Stomach (tissue), 19 donors: ENCODE measurements at regions of chr11 and their contacts with region 1.

Region 1: DNA sequence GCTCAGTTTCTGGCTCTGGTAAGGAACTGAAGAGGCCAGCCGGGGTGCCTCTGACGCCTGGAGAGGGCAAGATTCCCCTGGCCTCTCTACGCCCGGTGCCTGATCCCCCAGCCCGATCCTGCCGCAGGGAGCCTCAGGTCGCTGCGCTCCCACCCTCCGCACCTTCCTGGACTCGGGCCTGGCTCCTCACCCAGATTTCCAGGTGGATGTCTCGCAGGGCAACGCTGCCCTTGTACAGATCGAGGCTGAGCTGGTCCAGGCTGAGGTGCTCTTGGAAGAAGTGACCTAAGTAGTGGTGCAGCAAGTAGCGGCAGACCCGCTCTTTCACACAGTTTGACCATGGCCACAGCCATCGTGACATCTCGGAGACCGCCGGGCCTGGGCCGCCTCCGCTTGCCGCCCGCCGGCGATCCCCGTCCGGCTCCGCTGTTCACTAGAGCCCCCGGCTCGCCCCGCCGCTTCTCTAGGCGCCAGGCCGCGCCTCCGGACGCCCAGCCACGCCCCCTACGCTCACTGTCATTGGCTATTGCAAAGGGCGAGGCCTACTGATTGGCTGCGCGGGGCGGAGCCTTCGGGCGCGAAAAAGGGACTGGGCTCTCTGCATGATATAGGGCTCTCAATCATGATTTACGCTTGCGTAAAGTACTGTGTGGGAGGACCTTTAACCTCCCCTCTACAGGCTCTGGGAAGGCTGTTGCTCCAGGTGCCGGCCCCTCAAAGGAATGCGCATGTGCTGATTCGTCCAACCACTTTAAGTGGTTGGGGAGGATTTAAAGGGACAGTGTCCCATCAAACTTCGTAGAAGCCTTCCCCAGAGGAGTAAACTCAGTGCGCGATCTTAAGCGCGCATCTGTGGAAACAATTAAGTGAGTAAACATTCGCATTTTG is at the start of gene ATG2A:
- DNase-seq: peak; percentile 100
- H3K4me3 ChIP-seq: peak within 1 kb of the TSS; percentile 59 to 93 (median 66)
- H3K27ac ChIP-seq: peak within 1 kb of the TSS; percentile 81 to 84 (median 83)
- H3K4me1 ChIP-seq: peaks cover 25 to 37% (median 36%) of the 10 kb centered on the region in 4 donors
- H3K27me3 ChIP-seq: no peaks in the 10 kb centered on the region
- CTCF ChIP-seq: no peak
- EP300 ChIP-seq: no peak
- POLR2A ChIP-seq: peak in 2 of 4 donors; percentile 31 to 62
- total RNA-seq, gene ATG2A: 14.3 to 77.6 (median 46.1) TPM

Region 2: DNA sequence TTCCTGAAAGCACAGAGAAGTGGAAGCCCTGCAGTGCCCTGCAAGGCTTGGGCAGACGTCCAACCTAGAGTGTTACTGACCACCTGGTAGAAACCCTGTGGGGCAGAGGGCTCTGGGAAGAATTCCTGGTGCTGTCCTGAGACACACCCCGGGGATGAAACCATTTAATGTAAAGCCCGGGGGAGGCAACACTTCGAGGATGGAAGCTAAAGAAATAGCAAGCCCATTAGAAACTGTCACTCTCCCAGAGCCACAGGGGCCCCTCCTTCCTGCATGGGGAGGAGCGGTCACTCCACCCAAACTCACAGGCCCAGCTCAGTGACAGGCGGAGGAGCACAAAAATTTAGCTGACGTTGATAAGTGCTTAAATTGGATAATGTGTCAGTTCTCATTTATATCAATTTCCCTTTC is 251.6 kb before region 1 on chr11:
- intact Hi-C with region 1: no loop called
- DNase-seq: no peak
- H3K4me3 ChIP-seq: no peak overlapping the region
- H3K27ac ChIP-seq: no peak overlapping the region
- H3K4me1 ChIP-seq: no peaks in the 10 kb centered on the region
- H3K27me3 ChIP-seq: peaks cover 0 to 31% (median 0%) of the 10 kb centered on the region in 3 donors
- CTCF ChIP-seq: no peak
- EP300 ChIP-seq: no peak
- POLR2A ChIP-seq: no peak

Region 3: GRCh38 chr11:64996710-64997380 is 79.8 kb after region 1 on chr11 and contains the start of gene BATF2:
- intact Hi-C with region 1: loop called (anchors 10 kb)
- DNase-seq: peak; percentile 89 to 91
- H3K4me3 ChIP-seq: peak within 1 kb of the TSS; percentile 49 to 59 (median 52)
- H3K27ac ChIP-seq: peak within 1 kb of the TSS; percentile 57 to 90 (median 84)
- H3K4me1 ChIP-seq: peaks cover 6 to 31% (median 28%) of the 10 kb centered on the region in 4 donors
- H3K27me3 ChIP-seq: no peaks in the 10 kb centered on the region
- CTCF ChIP-seq: peak in 5 of 7 experiments; percentile 26 to 64 (median 44)
- EP300 ChIP-seq: no peak
- POLR2A ChIP-seq: peak in 2 of 4 donors; percentile 27 to 49
- total RNA-seq, gene BATF2: 0.73 to 29.5 (median 3.0) TPM in 4 of 5 donors, not detected in the other